Transverse colon (tissue), 4 donors: ENCODE measurements at regions of chr6 and their contacts with region 1.

Region 1: DNA sequence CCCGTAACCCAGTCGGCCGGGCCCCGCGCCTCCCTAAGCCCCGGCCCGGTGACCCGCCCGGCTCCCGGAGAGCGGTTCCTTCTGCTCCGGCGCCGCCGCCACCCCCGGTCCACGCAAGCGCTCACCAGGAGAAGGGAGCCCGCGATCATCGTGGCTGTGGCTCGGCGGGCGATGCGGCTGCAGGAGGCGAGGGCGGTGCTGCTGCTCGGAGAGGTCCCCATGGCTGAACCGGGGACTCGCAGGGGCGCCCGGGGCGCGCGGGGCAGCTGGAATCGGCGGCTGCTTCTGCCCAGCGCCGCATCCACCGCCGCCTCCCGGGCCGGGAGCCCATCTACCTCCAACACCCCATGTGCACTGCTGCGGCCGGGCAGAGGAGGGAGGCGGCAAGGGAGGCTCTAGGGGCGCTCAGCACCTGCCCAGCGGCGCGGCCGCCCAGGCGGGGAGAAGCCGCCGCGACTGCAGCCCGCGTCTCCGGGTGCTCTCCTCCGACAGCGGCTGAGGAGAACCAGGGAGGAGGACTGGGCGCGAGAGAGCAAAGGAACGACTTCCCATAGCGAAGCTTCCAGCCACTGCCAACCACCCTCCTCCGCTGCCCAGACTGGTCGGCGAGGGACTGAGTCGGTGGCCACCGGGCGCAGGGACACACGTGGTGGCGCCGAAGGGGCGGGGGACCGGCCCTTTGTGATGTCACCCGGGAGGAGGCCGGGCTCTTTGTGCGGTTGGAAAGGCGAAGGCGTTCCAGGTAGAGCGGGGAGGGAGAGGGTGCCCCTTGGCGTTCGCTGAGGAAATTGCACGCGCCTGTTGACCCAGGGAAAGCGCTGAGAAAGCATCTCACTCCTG is at the start of gene TNFRSF21:
- DNase-seq: peak; percentile 95
- H3K4me3 ChIP-seq: peak within 1 kb of the TSS; percentile 61 to 92 (median 70)
- H3K27ac ChIP-seq: peak within 1 kb of the TSS; percentile 89 to 92 (median 91)
- H3K4me1 ChIP-seq: peaks cover 0 to 29% (median 15%) of the 10 kb centered on the region in 4 donors
- H3K27me3 ChIP-seq: no peaks in the 10 kb centered on the region
- CTCF ChIP-seq: peak; percentile 93 to 98 (median 95)
- EP300 ChIP-seq: no peak
- POLR2A ChIP-seq: peak; percentile 95
- total RNA-seq, gene TNFRSF21: 45.4 to 136 (median 73.4) TPM

Region 2: DNA sequence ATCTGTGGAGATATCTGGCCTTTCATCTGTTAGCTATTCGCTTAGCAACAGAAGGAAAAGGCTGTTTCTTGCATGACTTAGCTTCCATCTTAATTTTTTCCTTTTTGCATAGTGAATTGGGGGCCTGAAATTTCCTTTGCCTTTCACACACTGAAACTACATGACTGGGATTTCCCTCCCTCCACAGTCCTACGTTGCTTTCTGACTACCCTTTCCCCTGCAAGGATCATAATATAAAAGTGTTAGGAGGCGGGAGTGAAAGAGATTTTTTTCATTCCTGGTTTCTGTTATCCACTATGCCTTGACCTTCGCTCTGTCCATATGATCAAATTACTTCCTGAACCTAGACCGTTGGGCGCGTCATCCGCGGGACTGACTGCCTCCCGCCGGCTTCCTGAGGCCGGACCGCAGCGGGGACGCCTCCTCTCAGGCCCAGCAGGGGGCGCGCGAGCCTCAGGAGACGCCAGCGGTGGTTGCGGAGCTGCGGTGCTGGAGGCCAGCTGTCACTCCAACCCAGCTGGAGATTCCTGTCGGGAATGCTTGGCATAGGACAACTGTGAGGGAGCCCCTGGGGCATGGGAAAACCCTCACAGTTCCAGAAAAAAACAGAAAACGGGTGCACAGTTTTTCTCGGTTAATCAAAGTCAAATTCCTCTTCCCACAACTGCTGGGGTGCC is 460.7 kb before region 1 on chr6:
- in situ Hi-C with region 1: loop called in 3 of 4 experiments (anchors 10 to 25 kb)
- intact Hi-C with region 1: loop called (anchors 5 kb)
- DNase-seq: peak; percentile 93
- H3K4me3 ChIP-seq: no peak overlapping the region
- H3K27ac ChIP-seq: peak overlapping the region; percentile 6 to 43 (median 34)
- H3K4me1 ChIP-seq: peaks cover 0 to 14% (median 6%) of the 10 kb centered on the region in 4 donors
- H3K27me3 ChIP-seq: no peaks in the 10 kb centered on the region
- CTCF ChIP-seq: peak; percentile 93 to 97 (median 96)
- EP300 ChIP-seq: peak; percentile 13
- POLR2A ChIP-seq: no peak

Region 3: DNA sequence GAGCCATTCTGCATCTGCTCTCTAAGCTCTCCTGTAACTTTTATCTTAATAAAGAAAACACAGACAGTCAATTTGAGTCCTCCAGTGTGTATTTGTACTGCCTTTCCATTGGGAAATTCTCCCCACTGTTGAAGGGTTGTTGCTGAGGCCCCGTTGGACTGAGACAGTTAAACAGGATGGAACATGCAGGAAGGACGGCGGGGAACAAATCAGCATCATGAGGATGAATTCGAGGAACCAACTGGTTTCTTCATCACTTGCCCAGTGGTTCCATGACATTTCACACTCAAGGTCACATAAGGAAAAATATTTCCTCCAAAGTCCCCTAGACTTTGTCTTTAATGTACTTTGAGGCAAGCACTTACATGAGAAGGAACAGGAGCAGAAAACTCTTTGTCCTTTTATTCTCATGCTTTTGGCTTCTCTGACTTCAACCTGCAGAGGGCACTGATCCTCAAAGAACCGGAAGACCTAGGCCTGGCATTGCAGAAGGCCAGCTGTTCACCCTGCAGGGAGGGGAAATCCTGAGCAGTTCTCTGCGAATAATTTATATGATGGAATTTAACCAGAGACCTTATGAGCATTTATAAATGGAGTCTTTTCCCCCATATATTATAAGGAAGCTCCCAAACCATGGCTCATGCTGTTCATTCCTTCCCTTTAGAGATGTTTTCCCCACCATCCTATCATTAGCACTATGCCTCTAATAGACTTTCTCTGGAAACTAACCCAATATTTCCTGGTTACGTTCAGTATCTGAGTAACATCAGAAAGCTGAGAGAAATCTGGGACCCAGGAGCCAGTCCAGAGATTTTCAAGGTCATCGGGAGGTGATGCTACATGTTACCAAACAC is 212.2 kb before region 1 on chr6:
- in situ Hi-C with region 1: loop called (anchors 5 to 10 kb)
- intact Hi-C with region 1: loop called (anchors 1 kb)
- DNase-seq: peak; percentile 74
- H3K4me3 ChIP-seq: no peak overlapping the region
- H3K27ac ChIP-seq: peak overlapping the region in 2 of 4 donors; percentile 3 to 56
- H3K4me1 ChIP-seq: peaks cover 0 to 33% (median 14%) of the 10 kb centered on the region in 4 donors
- H3K27me3 ChIP-seq: no peaks in the 10 kb centered on the region
- CTCF ChIP-seq: peak; percentile 65 to 87 (median 75)
- EP300 ChIP-seq: no peak
- POLR2A ChIP-seq: no peak

Region 4: DNA sequence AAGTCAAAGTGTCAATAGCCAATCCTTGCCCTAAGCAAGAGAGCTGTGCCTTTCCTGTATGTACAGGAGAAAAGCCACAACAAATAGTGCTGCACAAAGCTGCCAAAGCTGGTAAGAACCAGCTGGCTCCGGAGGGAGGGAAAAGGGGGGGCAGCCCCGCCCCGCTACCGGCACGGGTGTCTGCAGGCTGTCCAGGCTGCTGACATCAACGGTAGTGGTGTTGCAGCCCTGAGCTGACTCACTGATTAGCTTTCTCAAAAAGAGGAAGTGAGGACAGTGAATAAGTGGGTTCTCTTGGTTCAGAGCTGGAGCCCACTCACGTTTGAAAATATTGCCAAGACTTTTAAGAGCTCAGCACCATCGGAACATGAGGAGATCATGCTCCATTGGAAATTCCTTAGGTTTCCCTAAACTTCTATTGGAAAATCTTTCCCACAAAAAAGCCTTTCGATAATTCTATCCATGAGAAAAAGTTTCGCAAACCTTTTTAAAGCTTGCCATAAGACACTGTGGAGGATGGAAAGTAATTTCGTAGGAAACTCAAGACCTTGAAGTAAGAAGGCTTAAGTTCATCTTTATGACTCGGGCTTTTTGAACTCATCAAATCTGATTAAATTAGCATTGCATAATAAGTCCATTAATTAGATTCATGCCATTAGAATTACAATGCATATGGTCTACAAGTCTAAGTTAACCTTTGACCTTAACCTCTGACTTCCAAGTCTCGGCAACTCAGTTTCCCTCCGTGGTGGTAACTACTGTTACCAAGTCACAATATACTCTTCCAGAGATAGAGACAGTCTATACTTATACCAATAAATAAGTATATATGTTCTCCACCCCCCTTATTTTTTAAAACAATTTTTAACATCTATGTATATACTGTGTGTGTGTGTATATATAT is 66.8 kb before region 1 on chr6:
- in situ Hi-C with region 1: no loop called
- intact Hi-C with region 1: loop called (anchors 10 kb)
- DNase-seq: peak; percentile 93
- H3K4me3 ChIP-seq: no peak overlapping the region
- H3K27ac ChIP-seq: peak overlapping the region; percentile 61 to 80 (median 70)
- H3K4me1 ChIP-seq: peaks cover 14 to 47% (median 27%) of the 10 kb centered on the region in 4 donors
- H3K27me3 ChIP-seq: no peaks in the 10 kb centered on the region
- CTCF ChIP-seq: no peak
- EP300 ChIP-seq: peak; percentile 92
- POLR2A ChIP-seq: no peak